OCI-LY7 (cell line): ENCODE measurements at regions of chr18 and their contacts with region 1.

Region 1: GRCh38 chr18:63155169-63155852 is 164.3 kb downstream of the BCL2 start:
- DNase-seq: peak; percentile 79
- H3K4me3 ChIP-seq: peak overlapping the region; percentile 41
- H3K27ac ChIP-seq: no peak overlapping the region
- H3K4me1 ChIP-seq: peaks cover 55% of the 10 kb centered on the region
- CTCF ChIP-seq: peak; percentile 77

Region 2: GRCh38 chr18:63131106-63131958 is 24.0 kb before region 1 on chr18:
- CTCF ChIA-PET with region 1: no interaction called
- POLR2A ChIA-PET with region 1: interaction called, 3 read pairs
- intact Hi-C with region 1: loop called (anchors 1 kb)
- DNase-seq: peak; percentile 50
- H3K4me3 ChIP-seq: no peak overlapping the region
- H3K27ac ChIP-seq: no peak overlapping the region
- H3K4me1 ChIP-seq: peaks cover 4% of the 10 kb centered on the region
- CTCF ChIP-seq: peak; percentile 77

Region 3: GRCh38 chr18:63138436-63139340 is 16.6 kb before region 1 on chr18:
- CTCF ChIA-PET with region 1: interaction called, 6 read pairs
- POLR2A ChIA-PET with region 1: interaction called, 13 read pairs
- intact Hi-C with region 1: loop called (anchors 2 kb)
- DNase-seq: peak; percentile 52
- H3K4me3 ChIP-seq: peak overlapping the region; percentile 60
- H3K27ac ChIP-seq: peak overlapping the region; percentile 88
- H3K4me1 ChIP-seq: peaks cover 66% of the 10 kb centered on the region
- CTCF ChIP-seq: no peak

Region 4: GRCh38 chr18:63207143-63207790 is 52.0 kb after region 1 on chr18:
- CTCF ChIA-PET with region 1: no interaction called
- POLR2A ChIA-PET with region 1: no interaction called
- intact Hi-C with region 1: loop called (anchors 5 kb)
- DNase-seq: peak; percentile 49
- H3K4me3 ChIP-seq: peak overlapping the region; percentile 45
- H3K27ac ChIP-seq: no peak overlapping the region
- H3K4me1 ChIP-seq: peaks cover 39% of the 10 kb centered on the region
- CTCF ChIP-seq: no peak